CD4-positive, alpha-beta T cell (primary cell): ENCODE measurements at regions of chr2 and their contacts with region 1.

Region 1: DNA sequence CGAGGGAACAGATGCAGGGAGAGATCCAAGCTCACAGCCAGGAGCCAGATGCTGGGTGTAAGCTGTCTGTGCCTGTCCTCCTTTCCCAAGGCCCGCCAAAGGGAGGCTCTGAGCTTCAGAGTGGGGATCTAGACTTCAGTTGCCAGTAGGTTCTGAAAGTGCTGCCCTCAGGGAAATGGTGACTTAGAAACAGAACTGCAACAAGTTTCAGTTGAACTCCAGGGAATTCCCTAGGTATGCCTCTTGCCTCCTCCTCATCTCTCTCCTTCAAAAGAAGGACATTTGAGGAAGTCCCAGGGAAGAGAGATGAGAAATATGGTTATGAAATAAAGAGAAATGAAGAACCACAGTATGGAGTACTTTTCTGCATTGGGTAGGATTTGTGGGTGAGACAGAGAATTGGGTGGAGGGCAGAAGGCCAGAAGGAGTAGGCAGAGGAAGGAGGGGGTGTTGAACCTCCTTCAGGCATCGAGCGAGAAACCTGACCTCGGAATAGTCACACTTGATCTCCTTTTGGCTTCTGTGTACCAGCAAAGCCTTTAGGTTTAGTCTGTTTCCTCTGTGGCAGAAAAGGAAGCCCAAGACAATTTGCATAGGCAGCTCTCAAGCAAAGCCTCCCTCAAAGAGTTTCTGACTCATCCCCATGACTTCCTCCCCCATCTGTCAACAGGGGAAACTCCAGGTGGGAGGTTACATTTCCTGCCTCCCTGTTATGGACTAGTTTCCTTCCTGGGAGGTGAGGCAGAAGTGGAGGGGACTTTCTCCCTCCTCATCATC is 45.7 kb downstream of the QPCT start:
- DNase-seq: peak; percentile 14 to 90 (median 45)
- ATAC-seq: peak; percentile 93
- H3K4me3 ChIP-seq: no peak overlapping the region
- H3K4me3 Mint-ChIP-seq: peak overlapping the region; percentile 40
- H3K27ac ChIP-seq: peak overlapping the region; percentile 52 to 64
- H3K27ac Mint-ChIP-seq: no peak overlapping the region
- H3K4me1 ChIP-seq: peaks cover 25% of the 10 kb centered on the region
- H3K4me1 Mint-ChIP-seq: no peaks in the 10 kb centered on the region
- H3K27me3 ChIP-seq: no peaks in the 10 kb centered on the region
- H3K27me3 Mint-ChIP-seq: no peaks in the 10 kb centered on the region
- CTCF ChIP-seq: no peak

Region 2: DNA sequence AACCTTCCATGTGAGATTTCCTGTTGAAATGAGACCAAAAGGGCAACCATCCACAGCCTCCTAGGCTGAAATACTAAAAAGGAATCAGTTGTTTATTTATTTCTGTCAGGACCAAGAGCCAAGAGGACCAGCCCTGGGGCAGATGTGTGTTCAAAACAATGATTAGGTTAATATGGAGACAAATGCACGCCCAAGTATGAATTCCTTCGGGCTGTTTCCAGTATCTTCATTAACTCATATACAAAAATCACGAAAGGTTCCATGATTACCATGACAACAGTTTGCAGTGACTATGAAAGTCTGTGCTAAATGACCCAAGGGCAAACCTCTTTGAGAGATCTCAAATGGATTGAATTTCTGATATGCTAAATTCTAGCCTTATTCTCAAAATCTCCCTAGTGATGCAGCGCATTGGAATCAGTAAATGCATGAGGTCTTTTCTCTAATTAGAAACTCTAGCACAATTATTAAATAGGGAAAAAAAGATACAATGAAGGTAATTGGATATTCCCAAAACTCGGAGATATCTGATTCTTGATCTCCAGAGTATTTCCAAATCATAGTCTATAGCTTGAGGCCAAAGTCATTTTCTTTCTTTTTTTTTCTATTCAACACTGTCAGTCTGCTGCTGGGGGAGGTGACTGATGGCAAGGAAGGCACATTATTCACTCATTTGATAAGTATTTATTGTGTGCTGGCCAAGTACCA is 658.1 kb before region 1 on chr2:
- CTCF ChIA-PET with region 1: no interaction called
- POLR2A ChIA-PET with region 1: no interaction called
- intact Hi-C with region 1: no loop called
- DNase-seq: no peak
- ATAC-seq: no peak
- H3K4me3 ChIP-seq: no peak overlapping the region
- H3K4me3 Mint-ChIP-seq: no peak overlapping the region
- H3K27ac ChIP-seq: no peak overlapping the region
- H3K27ac Mint-ChIP-seq: no peak overlapping the region
- H3K4me1 ChIP-seq: no peaks in the 10 kb centered on the region
- H3K4me1 Mint-ChIP-seq: no peaks in the 10 kb centered on the region
- H3K27me3 ChIP-seq: peaks cover 0 to under 1% of the 10 kb centered on the region in 2 experiments
- H3K27me3 Mint-ChIP-seq: peaks cover 2% of the 10 kb centered on the region
- CTCF ChIP-seq: no peak

Region 3: GRCh38 chr2:37173741-37174140 is 216.4 kb before region 1 on chr2:
- CTCF ChIA-PET with region 1: no interaction called
- POLR2A ChIA-PET with region 1: no interaction called
- intact Hi-C with region 1: loop called in 1 of 2 experiments (anchors 10 kb)
- DNase-seq: no peak
- ATAC-seq: no peak
- H3K4me3 ChIP-seq: no peak overlapping the region
- H3K4me3 Mint-ChIP-seq: no peak overlapping the region
- H3K27ac ChIP-seq: no peak overlapping the region
- H3K27ac Mint-ChIP-seq: no peak overlapping the region
- H3K4me1 ChIP-seq: no peaks in the 10 kb centered on the region
- H3K4me1 Mint-ChIP-seq: no peaks in the 10 kb centered on the region
- H3K27me3 ChIP-seq: no peaks in the 10 kb centered on the region
- H3K27me3 Mint-ChIP-seq: no peaks in the 10 kb centered on the region
- CTCF ChIP-seq: no peak

Region 4: GRCh38 chr2:37376421-37377186 is 13.6 kb before region 1 on chr2:
- CTCF ChIA-PET with region 1: interaction called, 4 read pairs
- POLR2A ChIA-PET with region 1: interaction called, 10 read pairs
- intact Hi-C with region 1: no loop called
- DNase-seq: peak in 4 of 14 experiments; percentile 30 to 68 (median 56)
- ATAC-seq: peak; percentile 68
- H3K4me3 ChIP-seq: peak overlapping the region; percentile 6
- H3K4me3 Mint-ChIP-seq: peak overlapping the region; percentile 56
- H3K27ac ChIP-seq: no peak overlapping the region
- H3K27ac Mint-ChIP-seq: peak overlapping the region; percentile 48
- H3K4me1 ChIP-seq: peaks cover 12% of the 10 kb centered on the region
- H3K4me1 Mint-ChIP-seq: peaks cover 21% of the 10 kb centered on the region
- H3K27me3 ChIP-seq: peaks cover 22 to 59% of the 10 kb centered on the region in 2 experiments
- H3K27me3 Mint-ChIP-seq: peaks cover 59% of the 10 kb centered on the region
- CTCF ChIP-seq: no peak

Region 5: GRCh38 chr2:37832590-37833197 is 442.5 kb after region 1 on chr2:
- CTCF ChIA-PET with region 1: interaction called, 59 read pairs
- POLR2A ChIA-PET with region 1: no interaction called
- intact Hi-C with region 1: no loop called
- DNase-seq: peak; percentile 71 to 89 (median 80)
- ATAC-seq: peak; percentile 84
- H3K4me3 ChIP-seq: no peak overlapping the region
- H3K4me3 Mint-ChIP-seq: no peak overlapping the region
- H3K27ac ChIP-seq: no peak overlapping the region
- H3K27ac Mint-ChIP-seq: no peak overlapping the region
- H3K4me1 ChIP-seq: peaks cover 10% of the 10 kb centered on the region
- H3K4me1 Mint-ChIP-seq: peaks cover 19% of the 10 kb centered on the region
- H3K27me3 ChIP-seq: no peaks in the 10 kb centered on the region
- H3K27me3 Mint-ChIP-seq: no peaks in the 10 kb centered on the region
- CTCF ChIP-seq: peak; percentile 93

Region 6: GRCh38 chr2:38115216-38116032 is 725.2 kb after region 1 on chr2:
- CTCF ChIA-PET with region 1: no interaction called
- POLR2A ChIA-PET with region 1: no interaction called
- intact Hi-C with region 1: loop called (anchors 5 to 10 kb)
- DNase-seq: peak; percentile 23 to 69 (median 40)
- ATAC-seq: peak; percentile 52
- H3K4me3 ChIP-seq: no peak overlapping the region
- H3K4me3 Mint-ChIP-seq: no peak overlapping the region
- H3K27ac ChIP-seq: no peak overlapping the region
- H3K27ac Mint-ChIP-seq: no peak overlapping the region
- H3K4me1 ChIP-seq: no peaks in the 10 kb centered on the region
- H3K4me1 Mint-ChIP-seq: no peaks in the 10 kb centered on the region
- H3K27me3 ChIP-seq: peaks cover 5 to 6% of the 10 kb centered on the region in 2 experiments
- H3K27me3 Mint-ChIP-seq: peaks cover 50% of the 10 kb centered on the region
- CTCF ChIP-seq: peak; percentile 66